CD4-positive, alpha-beta memory T cell (primary cell): ENCODE measurements at regions of chr16 and their contacts with region 1.

Region 1: DNA sequence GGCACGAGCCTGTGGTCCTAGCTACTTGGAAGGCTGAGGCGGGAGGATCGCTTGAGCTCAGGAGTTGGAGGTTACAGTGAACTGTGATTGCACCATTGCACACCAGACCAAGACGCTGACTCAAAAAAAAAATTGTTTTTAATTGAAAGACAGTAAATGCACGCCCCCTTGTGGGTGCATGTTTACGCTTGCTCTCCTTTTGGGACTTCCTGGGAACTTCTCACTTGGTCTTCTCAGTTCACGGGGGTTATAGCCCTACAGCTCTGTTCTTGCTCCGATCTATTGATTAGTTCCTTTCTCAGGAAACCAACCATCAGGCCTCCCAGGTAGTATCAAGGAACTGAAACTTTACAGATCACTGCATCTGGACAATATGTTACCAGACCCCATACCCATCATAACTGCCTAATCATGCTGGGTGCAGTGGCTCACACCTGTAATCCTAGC is 14.2 kb upstream of the RIPOR1 start:
- DNase-seq: peak; percentile 74 to 82 (median 79)
- H3K4me3 ChIP-seq: no peak overlapping the region
- H3K4me3 Mint-ChIP-seq: peak overlapping the region in 2 of 8 donors; percentile 50 to 57
- H3K27ac ChIP-seq: no peak overlapping the region
- H3K27ac Mint-ChIP-seq: peak overlapping the region in 3 of 7 donors; percentile 37 to 72 (median 69)
- H3K4me1 ChIP-seq: peaks cover 8% of the 10 kb centered on the region
- H3K4me1 Mint-ChIP-seq: peaks cover 4 to 10% (median 7%) of the 10 kb centered on the region in 4 donors
- H3K27me3 ChIP-seq: no peaks in the 10 kb centered on the region
- H3K27me3 Mint-ChIP-seq: no peaks in the 10 kb centered on the region

Region 2: DNA sequence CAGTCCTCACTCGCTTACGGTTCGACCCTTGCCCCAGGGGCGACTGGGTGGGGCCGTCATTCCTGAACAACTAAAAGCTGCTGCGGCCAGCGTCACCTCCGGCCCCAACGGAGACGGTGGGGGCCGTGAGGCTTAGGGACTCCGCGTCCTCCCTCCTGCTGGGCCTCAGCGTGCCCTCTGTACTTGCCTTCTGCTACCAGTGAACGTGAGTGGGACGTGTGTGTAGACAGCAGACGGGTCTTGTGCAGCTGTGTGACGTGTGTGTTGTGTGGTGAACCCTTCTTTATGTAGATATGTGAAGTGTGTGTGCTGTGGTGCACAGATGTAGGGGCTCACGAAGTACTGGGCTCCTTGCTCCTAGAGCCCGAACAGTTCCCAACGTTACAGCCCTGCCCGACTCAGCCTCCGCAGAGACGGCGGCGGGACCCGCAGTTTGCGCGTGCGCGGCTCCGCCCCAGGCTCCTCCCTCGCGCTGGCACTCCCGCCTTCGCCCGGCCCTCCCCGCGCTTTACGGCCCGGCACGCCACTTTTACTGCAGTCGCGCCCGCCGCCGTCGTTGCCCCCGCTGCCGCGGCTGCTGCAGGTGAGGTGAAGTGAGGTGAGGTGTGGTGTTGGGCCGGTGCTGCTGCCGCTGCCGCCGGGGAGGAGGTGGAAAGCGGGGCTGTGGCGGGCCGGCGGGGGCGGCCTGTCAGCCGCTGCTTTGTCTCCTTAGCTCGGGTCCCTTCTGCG is 404.8 kb before region 1 on chr16 and contains the start of gene PHAF1:
- CTCF ChIA-PET with region 1: no interaction called
- POLR2A ChIA-PET with region 1: no interaction called
- intact Hi-C with region 1: no loop called
- DNase-seq: peak; percentile 93 to 98 (median 96)
- H3K4me3 ChIP-seq: peak within 1 kb of the TSS; percentile 85 to 96
- H3K4me3 Mint-ChIP-seq: peak within 1 kb of the TSS; percentile 92 to 97 (median 94)
- H3K27ac ChIP-seq: peak within 1 kb of the TSS; percentile 66
- H3K27ac Mint-ChIP-seq: peak within 1 kb of the TSS; percentile 84 to 95 (median 91)
- H3K4me1 ChIP-seq: peaks cover 30% of the 10 kb centered on the region
- H3K4me1 Mint-ChIP-seq: peaks cover 21 to 41% (median 30%) of the 10 kb centered on the region in 4 donors
- H3K27me3 ChIP-seq: no peaks in the 10 kb centered on the region
- H3K27me3 Mint-ChIP-seq: no peaks in the 10 kb centered on the region
- total RNA-seq, gene PHAF1: 22.2 to 22.7 TPM

Region 3: DNA sequence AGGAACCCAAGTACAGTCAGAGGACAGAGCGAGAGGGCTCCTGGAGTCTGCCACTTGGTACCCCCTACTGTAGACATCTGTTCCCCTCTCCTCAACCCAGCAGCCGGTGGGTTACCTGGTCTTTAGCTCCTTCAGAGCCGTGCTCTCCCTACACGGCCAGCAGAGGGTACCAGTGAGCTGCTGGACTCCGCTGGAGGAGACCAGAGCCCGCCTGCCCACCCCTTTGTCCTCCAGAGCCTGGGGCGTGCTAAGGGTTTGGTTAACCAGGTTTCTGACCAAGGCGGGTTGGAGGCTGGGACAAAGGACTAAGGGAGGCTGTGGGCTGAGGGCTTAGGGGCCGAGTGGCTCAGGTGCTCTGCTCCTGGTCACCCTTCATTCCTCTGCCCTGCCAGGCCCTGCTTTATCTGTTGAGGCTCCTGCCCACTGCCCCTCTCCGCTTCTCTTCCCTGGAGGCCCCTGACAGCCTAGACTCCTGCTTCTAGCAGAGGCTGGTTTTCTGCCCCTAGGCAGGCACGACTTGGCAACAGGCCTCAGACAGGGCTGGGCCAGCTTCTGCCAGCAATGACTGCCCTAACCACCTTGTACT is 86.2 kb before region 1 on chr16:
- CTCF ChIA-PET with region 1: interaction called, 6 read pairs
- POLR2A ChIA-PET with region 1: no interaction called
- intact Hi-C with region 1: loop called (anchors 1 kb)
- DNase-seq: peak in 4 of 5 donors; percentile 30 to 41 (median 32)
- H3K4me3 ChIP-seq: no peak overlapping the region
- H3K4me3 Mint-ChIP-seq: no peak overlapping the region
- H3K27ac ChIP-seq: no peak overlapping the region
- H3K27ac Mint-ChIP-seq: no peak overlapping the region
- H3K4me1 ChIP-seq: peaks cover 4% of the 10 kb centered on the region
- H3K4me1 Mint-ChIP-seq: peaks cover 0 to 10% (median 7%) of the 10 kb centered on the region in 4 donors
- H3K27me3 ChIP-seq: peaks cover 26% of the 10 kb centered on the region
- H3K27me3 Mint-ChIP-seq: peaks cover 45 to 46% of the 10 kb centered on the region in 2 donors

Region 4: GRCh38 chr16:67499106-67499505 is 15.3 kb before region 1 on chr16:
- CTCF ChIA-PET with region 1: interaction called, 712 read pairs
- POLR2A ChIA-PET with region 1: interaction called, 11 read pairs
- intact Hi-C with region 1: loop called (anchors 1 kb)
- DNase-seq: no peak
- H3K4me3 ChIP-seq: no peak overlapping the region
- H3K4me3 Mint-ChIP-seq: no peak overlapping the region
- H3K27ac ChIP-seq: no peak overlapping the region
- H3K27ac Mint-ChIP-seq: peak overlapping the region in 3 of 7 donors; percentile 29 to 67 (median 53)
- H3K4me1 ChIP-seq: peaks cover 15% of the 10 kb centered on the region
- H3K4me1 Mint-ChIP-seq: peaks cover 9 to 25% (median 20%) of the 10 kb centered on the region in 4 donors
- H3K27me3 ChIP-seq: no peaks in the 10 kb centered on the region
- H3K27me3 Mint-ChIP-seq: no peaks in the 10 kb centered on the region

Region 5: DNA sequence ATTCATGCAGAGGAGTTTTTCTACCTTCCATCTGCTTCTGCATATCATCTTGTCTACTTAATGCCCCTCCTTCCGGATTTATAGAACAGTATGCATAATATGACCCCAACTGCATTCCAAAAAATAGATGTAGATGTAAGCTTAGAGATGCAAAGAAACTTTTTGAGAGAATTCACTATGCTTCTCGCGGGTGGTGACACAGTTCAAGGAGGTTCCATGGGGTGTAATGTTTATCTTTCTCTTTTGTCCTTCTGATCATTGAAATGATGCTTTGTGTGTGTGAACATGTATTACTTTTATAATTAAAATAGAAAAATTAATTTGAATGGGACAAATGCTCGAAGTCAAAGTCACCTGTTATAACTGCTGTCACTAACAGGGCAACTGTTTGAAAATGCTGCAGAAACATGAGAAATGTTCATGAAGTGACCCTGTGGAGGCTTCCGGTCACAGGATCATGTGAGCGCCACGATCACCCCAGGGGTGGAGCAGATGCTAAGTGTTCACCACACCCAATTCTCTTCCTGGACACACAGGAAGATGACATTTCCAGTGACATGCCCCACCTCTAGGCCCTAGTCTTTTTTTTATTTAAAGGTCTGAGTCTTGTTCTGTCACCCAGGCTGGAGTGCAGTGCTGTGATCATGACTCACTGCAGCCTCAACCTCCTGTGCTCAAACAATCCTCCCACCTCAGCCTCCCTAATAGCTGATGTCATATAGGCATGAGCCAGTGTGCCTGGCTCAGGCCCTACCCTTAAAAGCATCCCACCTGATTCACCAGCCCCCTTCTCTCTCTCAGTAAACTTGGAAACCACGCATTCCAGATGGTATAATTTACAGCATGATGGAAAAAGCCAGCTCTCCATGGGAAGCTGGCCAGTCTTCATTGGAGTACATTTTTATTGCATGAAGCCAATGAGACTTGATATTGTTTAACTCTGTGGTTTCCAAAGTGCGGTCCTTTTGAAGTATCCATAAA is 10.1 kb before region 1 on chr16:
- CTCF ChIA-PET with region 1: interaction called, 712 read pairs
- POLR2A ChIA-PET with region 1: interaction called, 11 read pairs
- intact Hi-C with region 1: no loop called
- DNase-seq: peak; percentile 42 to 62 (median 48)
- H3K4me3 ChIP-seq: no peak overlapping the region
- H3K4me3 Mint-ChIP-seq: peak overlapping the region in 7 of 8 donors; percentile 50 to 86 (median 78)
- H3K27ac ChIP-seq: peak overlapping the region; percentile 48
- H3K27ac Mint-ChIP-seq: peak overlapping the region; percentile 78 to 98 (median 97)
- H3K4me1 ChIP-seq: peaks cover 56% of the 10 kb centered on the region
- H3K4me1 Mint-ChIP-seq: peaks cover 35 to 61% (median 47%) of the 10 kb centered on the region in 4 donors
- H3K27me3 ChIP-seq: no peaks in the 10 kb centered on the region
- H3K27me3 Mint-ChIP-seq: no peaks in the 10 kb centered on the region

Region 6: GRCh38 chr16:67716097-67716496 is 201.7 kb after region 1 on chr16:
- CTCF ChIA-PET with region 1: no interaction called
- POLR2A ChIA-PET with region 1: no interaction called
- intact Hi-C with region 1: no loop called
- DNase-seq: no peak
- H3K4me3 ChIP-seq: no peak overlapping the region
- H3K4me3 Mint-ChIP-seq: peak overlapping the region in 1 of 8 donors; percentile 11
- H3K27ac ChIP-seq: no peak overlapping the region
- H3K27ac Mint-ChIP-seq: no peak overlapping the region
- H3K4me1 ChIP-seq: peaks cover 27% of the 10 kb centered on the region
- H3K4me1 Mint-ChIP-seq: peaks cover 41 to 65% (median 52%) of the 10 kb centered on the region in 4 donors
- H3K27me3 ChIP-seq: no peaks in the 10 kb centered on the region
- H3K27me3 Mint-ChIP-seq: no peaks in the 10 kb centered on the region